Sigmoid colon (tissue), 7 donors: ENCODE measurements at regions of chr6 and their contacts with region 1.

Region 1: GRCh38 chr6:130020907-130021629 is 2.7 kb downstream of the L3MBTL3 start:
- DNase-seq: peak; percentile 93
- H3K4me3 ChIP-seq: peak overlapping the region; percentile 73 to 91 (median 86)
- H3K27ac ChIP-seq: peak overlapping the region; percentile 76 to 85 (median 82)
- H3K4me1 ChIP-seq: peaks cover 0 to 11% (median 4%) of the 10 kb centered on the region in 4 donors
- H3K27me3 ChIP-seq: no peaks in the 10 kb centered on the region
- CTCF ChIP-seq: peak; percentile 60 to 79 (median 70)
- EP300 ChIP-seq: no peak
- POLR2A ChIP-seq: no peak

Region 2: DNA sequence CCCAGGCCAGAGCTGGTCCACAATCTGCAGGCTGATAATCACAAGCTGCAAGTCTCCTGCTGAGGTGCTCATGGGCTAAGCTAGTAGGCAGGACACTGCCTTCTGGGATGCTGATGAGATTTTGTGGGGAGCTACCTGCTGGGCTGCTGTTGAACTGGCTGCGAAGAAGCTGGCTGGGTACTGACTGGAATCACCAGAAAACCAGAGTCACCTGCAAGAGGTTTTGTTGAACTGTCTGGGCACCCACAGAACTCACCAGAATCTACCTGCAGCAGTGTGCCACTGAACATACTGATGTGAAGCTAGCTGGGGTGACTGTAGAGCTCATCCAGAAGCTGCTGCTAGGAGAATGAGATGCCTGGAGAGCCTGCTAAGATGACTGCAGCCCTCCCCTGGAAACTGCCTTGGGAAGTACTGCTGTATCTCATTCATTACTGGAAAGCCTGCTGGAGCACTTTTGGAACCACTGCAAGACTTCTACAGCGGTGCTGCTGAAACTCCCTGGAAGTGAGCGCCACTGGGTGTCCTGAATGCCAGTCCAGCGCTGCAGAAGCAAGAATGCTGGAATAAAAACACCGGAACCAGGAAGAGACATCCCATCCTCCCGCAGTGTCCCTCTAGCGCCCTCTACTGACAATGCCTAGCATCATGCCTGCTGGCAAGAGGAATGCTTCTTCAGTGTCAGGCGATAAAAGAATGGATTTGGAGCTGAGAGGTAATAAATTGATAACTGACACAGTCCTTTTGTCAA is 246.2 kb before region 1 on chr6:
- intact Hi-C with region 1: loop called (anchors 5 kb)
- DNase-seq: peak; percentile 81
- H3K4me3 ChIP-seq: peak overlapping the region in 1 of 4 donors; percentile 6
- H3K27ac ChIP-seq: no peak overlapping the region
- H3K4me1 ChIP-seq: peaks cover 0 to 5% (median 2%) of the 10 kb centered on the region in 4 donors
- H3K27me3 ChIP-seq: peaks cover 0 to 9% (median 0%) of the 10 kb centered on the region in 3 donors
- CTCF ChIP-seq: peak; percentile 46 to 88 (median 64)
- EP300 ChIP-seq: no peak
- POLR2A ChIP-seq: no peak

Region 3: GRCh38 chr6:129893640-129894039 is 127.4 kb before region 1 on chr6:
- intact Hi-C with region 1: loop called (anchors 2 kb)
- DNase-seq: no peak
- H3K4me3 ChIP-seq: no peak overlapping the region
- H3K27ac ChIP-seq: no peak overlapping the region
- H3K4me1 ChIP-seq: no peaks in the 10 kb centered on the region
- H3K27me3 ChIP-seq: no peaks in the 10 kb centered on the region
- CTCF ChIP-seq: no peak
- EP300 ChIP-seq: no peak
- POLR2A ChIP-seq: no peak

Region 4: GRCh38 chr6:129936329-129937165 is 84.5 kb before region 1 on chr6:
- intact Hi-C with region 1: no loop called
- DNase-seq: no peak
- H3K4me3 ChIP-seq: no peak overlapping the region
- H3K27ac ChIP-seq: no peak overlapping the region
- H3K4me1 ChIP-seq: peaks cover 0 to 5% (median 0%) of the 10 kb centered on the region in 4 donors
- H3K27me3 ChIP-seq: no peaks in the 10 kb centered on the region
- CTCF ChIP-seq: no peak
- EP300 ChIP-seq: no peak
- POLR2A ChIP-seq: no peak